ENCODE measurements at regions of chr2 and their contacts with region 1.

Region 1: DNA sequence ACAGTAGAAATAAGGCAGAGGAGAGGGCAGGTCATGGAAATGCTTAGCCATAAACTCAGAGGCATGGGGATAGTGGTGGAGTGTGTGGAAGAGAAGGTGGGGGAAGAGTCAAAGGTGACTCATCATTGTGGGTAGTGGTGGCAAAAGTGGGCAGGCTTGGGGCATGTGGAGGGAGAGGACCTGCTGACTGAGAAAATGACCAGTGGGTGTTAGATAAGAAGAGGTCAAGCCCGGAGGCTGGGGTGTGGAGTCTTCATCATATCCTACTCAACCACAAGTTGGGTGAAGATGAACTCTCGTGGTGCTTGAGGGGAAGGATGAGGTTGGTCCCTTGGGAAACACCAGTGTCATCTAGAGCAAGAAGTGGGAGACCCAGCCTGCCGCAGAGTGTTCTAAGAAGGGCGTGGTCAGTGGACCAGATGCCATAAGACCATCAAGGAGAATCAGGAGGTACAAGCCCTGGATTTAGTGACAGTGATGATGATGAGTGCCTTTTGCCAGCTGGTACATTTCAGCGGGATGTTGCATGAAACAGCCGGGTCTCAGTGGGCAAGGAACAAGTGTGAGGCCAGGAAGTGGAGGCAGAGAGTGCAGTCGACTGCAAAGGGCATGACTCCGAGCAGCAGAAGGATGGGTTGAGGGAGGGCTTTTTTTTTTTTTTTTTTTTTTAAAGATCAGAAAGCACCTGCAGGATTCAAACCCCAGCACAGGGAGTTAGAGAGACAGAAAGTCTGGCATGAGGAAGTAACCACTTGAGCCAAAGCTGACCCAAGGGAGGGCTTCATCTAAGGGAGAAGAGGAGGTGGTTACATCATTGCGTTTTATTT is 122.6 kb upstream of the SPRED2 start:
- DNase-seq: no peak
- ATAC-seq: no peak

Region 2: GRCh38 chr2:65264821-65265670 is 289.9 kb before region 1 on chr2:
- intact Hi-C with region 1: loop called (anchors 5 to 10 kb)
- DNase-seq: no peak
- ATAC-seq: peak; percentile 88

Region 3: GRCh38 chr2:65278531-65278981 is 276.4 kb before region 1 on chr2:
- intact Hi-C with region 1: loop called in 1 of 2 experiments (anchors 10 kb)
- DNase-seq: no peak
- ATAC-seq: no peak